ENCODE measurements at regions of chr22 and their contacts with region 1.

Region 1: GRCh38 chr22:42444077-42444904 is 12.1 kb upstream of the NFAM1 start:
- DNase-seq: peak; percentile 68 to 93 (median 82)
- ATAC-seq: peak; percentile 87 to 91 (median 88)
- H3K4me3 ChIP-seq: peak overlapping the region; percentile 52 to 58
- H3K4me3 Mint-ChIP-seq: peak overlapping the region; percentile 71 to 88 (median 72)
- H3K27ac ChIP-seq: peak overlapping the region; percentile 83
- H3K27ac Mint-ChIP-seq: peak overlapping the region; percentile 90 to 93
- H3K4me1 ChIP-seq: peaks cover 9 to 22% of the 10 kb centered on the region in 2 experiments
- H3K4me1 Mint-ChIP-seq: peaks cover 25 to 33% (median 29%) of the 10 kb centered on the region in 3 donors
- H3K27me3 ChIP-seq: peaks cover 0 to 2% of the 10 kb centered on the region in 2 experiments
- H3K27me3 Mint-ChIP-seq: peaks cover 0 to under 1% of the 10 kb centered on the region in 2 donors

Region 2: DNA sequence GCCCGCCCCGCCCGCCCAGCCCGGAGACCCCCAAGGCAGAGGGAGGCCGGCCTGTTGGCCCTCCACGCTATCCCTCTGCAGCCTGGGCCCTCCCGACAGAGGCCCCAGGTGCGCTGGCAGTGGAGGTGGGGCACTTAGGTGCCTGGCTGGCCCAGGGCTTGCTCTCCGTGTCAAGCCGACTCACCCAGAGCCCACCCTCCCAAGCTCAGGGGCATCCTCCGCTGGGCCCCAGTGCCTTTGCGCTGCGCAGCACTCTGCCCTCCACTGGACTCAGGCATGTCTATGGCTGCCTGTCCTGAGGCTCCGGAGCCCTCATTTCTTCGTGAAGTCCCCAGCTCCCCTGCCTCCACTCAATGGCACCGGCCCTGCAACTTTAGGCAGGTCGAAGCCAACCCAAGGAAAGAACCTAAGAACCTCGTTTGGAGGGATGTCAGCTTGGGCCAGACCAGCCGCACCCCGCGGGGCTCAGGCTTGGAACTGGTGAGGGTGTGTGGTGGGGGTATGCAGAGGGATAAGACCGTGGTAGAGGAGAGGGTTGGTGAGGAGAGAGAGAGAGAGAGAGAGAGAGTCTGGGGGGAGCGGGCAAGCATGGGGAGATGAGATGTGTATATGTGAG is 486.2 kb before region 1 on chr22:
- CTCF ChIA-PET with region 1: no interaction called
- POLR2A ChIA-PET with region 1: no interaction called
- DNase-seq: no peak
- ATAC-seq: peak; percentile 41 to 62 (median 50)
- H3K4me3 ChIP-seq: no peak overlapping the region
- H3K4me3 Mint-ChIP-seq: peak overlapping the region in 1 of 3 donors; percentile 53
- H3K27ac ChIP-seq: no peak overlapping the region
- H3K27ac Mint-ChIP-seq: no peak overlapping the region
- H3K4me1 ChIP-seq: peaks cover 0 to 12% of the 10 kb centered on the region in 2 experiments
- H3K4me1 Mint-ChIP-seq: peaks cover 3 to 11% (median 8%) of the 10 kb centered on the region in 3 donors
- H3K27me3 ChIP-seq: peaks cover 0 to 11% of the 10 kb centered on the region in 2 experiments
- H3K27me3 Mint-ChIP-seq: peaks cover 0 to 4% of the 10 kb centered on the region in 2 donors

Region 3: GRCh38 chr22:42101199-42101598 is 343.1 kb before region 1 on chr22:
- CTCF ChIA-PET with region 1: interaction called in 1 of 2 experiments, 3 read pairs
- POLR2A ChIA-PET with region 1: interaction called in 1 of 2 experiments, 10 read pairs
- DNase-seq: no peak
- ATAC-seq: no peak
- H3K4me3 ChIP-seq: no peak overlapping the region
- H3K4me3 Mint-ChIP-seq: no peak overlapping the region
- H3K27ac ChIP-seq: no peak overlapping the region
- H3K27ac Mint-ChIP-seq: no peak overlapping the region
- H3K4me1 ChIP-seq: no peaks in the 10 kb centered on the region
- H3K4me1 Mint-ChIP-seq: peaks cover 0 to 4% (median 2%) of the 10 kb centered on the region in 3 donors
- H3K27me3 ChIP-seq: no peaks in the 10 kb centered on the region
- H3K27me3 Mint-ChIP-seq: no peaks in the 10 kb centered on the region